Activated CD4-positive, alpha-beta T cell treated with anti-CD3 and anti-CD28 coated beads for 36 hours (primary cell): ENCODE measurements at regions of chr9 and their contacts with region 1.

Region 1: DNA sequence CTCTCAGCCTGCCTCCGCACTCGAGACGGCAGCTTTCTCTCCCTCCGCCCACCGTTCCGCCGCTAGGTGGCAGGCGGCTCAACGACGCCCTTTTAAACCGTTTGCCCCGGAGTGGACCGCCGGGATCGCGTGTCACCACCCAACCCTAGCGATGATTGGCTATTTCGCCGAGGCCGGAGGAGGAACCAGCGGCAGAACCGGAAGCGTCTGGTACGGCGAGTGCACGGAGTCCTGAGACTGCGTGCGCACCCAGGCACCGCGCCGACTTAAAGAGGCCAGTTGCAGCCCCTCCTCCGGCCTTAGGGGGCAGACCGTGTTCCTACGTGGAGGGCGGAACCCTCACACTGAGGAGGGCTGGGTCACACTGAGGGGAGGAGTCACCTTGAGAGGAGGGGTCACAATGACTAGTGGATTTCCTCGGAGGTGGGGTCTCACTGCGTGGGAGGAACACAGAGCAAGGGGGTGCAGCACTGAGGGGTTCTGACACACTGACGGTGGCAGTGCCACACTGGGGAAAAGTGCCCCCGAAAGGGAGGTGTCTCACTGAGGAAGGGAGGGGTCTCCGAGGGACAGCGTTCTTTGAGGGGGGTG is 980 bp upstream of the TESK1 start:
- DNase-seq: peak; percentile 100
- ATAC-seq: peak; percentile 93
- H3K4me3 Mint-ChIP-seq: peak overlapping the region; percentile 83
- H3K27ac Mint-ChIP-seq: peak overlapping the region; percentile 96
- H3K4me1 Mint-ChIP-seq: peaks cover 23% of the 10 kb centered on the region
- H3K27me3 Mint-ChIP-seq: no peaks in the 10 kb centered on the region

Region 2: GRCh38 chr9:35071814-35072460 is 532.1 kb before region 1 on chr9:
- CTCF ChIA-PET with region 1: no interaction called
- POLR2A ChIA-PET with region 1: no interaction called
- intact Hi-C with region 1: loop called in 1 of 2 experiments (anchors 1 kb)
- DNase-seq: peak; percentile 83
- ATAC-seq: peak; percentile 47
- H3K4me3 Mint-ChIP-seq: peak overlapping the region; percentile 91
- H3K27ac Mint-ChIP-seq: peak overlapping the region; percentile 95
- H3K4me1 Mint-ChIP-seq: peaks cover 56% of the 10 kb centered on the region
- H3K27me3 Mint-ChIP-seq: no peaks in the 10 kb centered on the region

Region 3: DNA sequence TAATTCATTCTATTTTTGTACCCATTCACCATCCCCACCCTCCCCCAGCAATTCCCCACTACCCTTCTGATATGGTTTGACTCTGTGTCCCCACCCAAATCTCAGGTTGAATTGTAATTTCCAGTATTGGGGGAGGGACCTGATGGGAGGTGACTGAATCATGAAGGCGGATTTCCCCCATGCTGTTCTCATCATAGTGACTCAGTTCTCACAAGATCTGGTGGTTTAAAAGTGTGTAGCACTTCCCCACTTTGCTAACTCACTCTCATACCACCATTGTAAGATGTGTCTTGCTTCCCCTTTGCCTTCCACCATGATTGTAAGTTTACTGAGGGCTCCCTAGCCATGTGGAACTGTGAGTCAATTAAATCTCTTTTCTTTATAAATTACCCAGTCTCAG is 25.0 kb before region 1 on chr9:
- CTCF ChIA-PET with region 1: interaction called, 6 read pairs
- POLR2A ChIA-PET with region 1: no interaction called
- intact Hi-C with region 1: loop called in 1 of 2 experiments (anchors 1 kb)
- DNase-seq: peak; percentile 69
- ATAC-seq: peak; percentile 96
- H3K4me3 Mint-ChIP-seq: peak overlapping the region; percentile 28
- H3K27ac Mint-ChIP-seq: peak overlapping the region; percentile 89
- H3K4me1 Mint-ChIP-seq: peaks cover 23% of the 10 kb centered on the region
- H3K27me3 Mint-ChIP-seq: no peaks in the 10 kb centered on the region

Region 4: DNA sequence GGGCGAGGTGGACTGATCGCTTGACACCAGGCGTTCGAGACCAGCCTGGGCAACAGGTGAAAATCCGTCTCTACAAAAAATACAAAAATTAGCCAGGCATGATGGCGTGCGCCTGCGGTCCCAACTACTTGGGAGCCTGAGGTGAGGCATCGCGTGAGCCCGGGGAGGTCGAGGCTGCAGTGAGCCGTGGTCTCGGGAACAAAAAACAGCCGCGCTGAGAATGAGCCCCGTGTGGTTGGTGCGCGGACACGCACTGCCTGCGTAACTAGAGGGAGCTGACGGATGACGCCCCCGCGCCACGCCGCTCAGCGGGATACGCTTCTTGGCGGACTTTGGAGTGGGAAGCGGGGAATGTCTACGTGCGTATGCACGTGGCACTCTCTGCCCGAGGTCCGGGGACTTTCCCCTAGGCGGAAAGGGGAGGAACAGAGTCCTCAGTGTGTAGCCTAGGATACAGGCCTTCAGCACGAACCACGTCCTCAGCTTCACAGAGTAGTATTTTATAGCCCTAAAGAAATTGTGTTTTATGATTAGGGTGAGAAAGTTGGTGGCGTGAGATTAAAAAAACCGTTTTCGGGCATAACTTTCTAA is 53.6 kb after region 1 on chr9 and contains the start of gene RMRP:
- CTCF ChIA-PET with region 1: interaction called, 15 read pairs
- POLR2A ChIA-PET with region 1: no interaction called
- intact Hi-C with region 1: loop called (anchors 1 kb)
- DNase-seq: peak; percentile 97
- ATAC-seq: peak; percentile 95
- H3K4me3 Mint-ChIP-seq: peak within 1 kb of the TSS; percentile 80
- H3K27ac Mint-ChIP-seq: peak within 1 kb of the TSS; percentile 98
- H3K4me1 Mint-ChIP-seq: peaks cover 64% of the 10 kb centered on the region
- H3K27me3 Mint-ChIP-seq: peaks cover 2% of the 10 kb centered on the region
- total RNA-seq, gene RMRP: 894 to 11,462 TPM

Region 5: GRCh38 chr9:35829084-35829763 is 225.1 kb after region 1 on chr9 and contains the start of gene TMEM8B:
- CTCF ChIA-PET with region 1: no interaction called
- POLR2A ChIA-PET with region 1: no interaction called
- intact Hi-C with region 1: loop called in 1 of 2 experiments (anchors 1 kb)
- DNase-seq: peak; percentile 98
- ATAC-seq: peak; percentile 92
- H3K4me3 Mint-ChIP-seq: peak within 1 kb of the TSS; percentile 78
- H3K27ac Mint-ChIP-seq: peak within 1 kb of the TSS; percentile 78
- H3K4me1 Mint-ChIP-seq: peaks cover 13% of the 10 kb centered on the region
- H3K27me3 Mint-ChIP-seq: no peaks in the 10 kb centered on the region
- total RNA-seq, gene TMEM8B: 5.8 to 6.9 TPM